Naive thymus-derived CD4-positive, alpha-beta T cell (primary cell): ENCODE measurements at regions of chr17 and their contacts with region 1.

Region 1: DNA sequence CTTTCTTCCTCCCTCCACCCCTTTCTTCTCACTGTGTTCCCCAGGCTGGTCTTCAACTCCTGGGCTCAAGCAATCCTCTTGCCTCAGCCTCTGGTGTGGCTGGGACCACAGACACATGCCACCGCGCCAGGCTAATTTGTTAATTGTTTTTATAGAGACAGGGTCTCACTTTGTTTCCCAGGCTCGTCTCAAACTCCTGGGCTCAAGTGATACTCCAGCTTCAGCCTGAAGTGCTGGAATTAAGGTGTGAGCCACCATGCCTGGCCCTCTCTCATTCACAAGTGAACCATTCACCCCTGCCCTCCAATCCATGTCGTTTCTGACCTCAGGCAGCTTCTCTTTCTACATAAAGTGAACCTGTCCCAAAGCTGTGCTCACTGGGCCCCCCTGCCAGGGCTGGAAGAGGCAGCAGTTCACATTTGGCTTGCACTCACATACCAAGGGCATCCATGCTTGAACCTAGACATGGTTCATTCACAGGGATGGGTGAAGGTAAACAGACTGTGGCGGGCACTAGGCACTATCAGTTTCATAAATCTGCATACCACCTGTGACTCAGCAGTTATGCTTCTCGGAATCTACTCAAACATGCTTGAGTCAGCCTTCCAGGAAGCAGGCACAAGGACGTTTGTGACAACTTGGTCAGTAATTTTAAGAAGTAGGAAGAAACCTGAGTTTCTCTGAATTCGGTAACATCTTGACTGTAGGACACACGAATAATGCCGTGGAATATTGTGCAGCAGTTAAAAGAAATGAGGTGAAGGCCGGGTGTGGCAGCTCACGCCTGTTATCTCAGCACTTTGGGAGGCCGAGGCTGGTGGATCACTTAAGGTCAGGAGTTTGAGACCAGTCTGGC is 6.0 kb upstream of the RNF213 start:
- DNase-seq: peak in 1 of 9 donors; percentile 63
- ATAC-seq: peak; percentile 54
- H3K4me3 ChIP-seq: no peak overlapping the region
- H3K4me3 Mint-ChIP-seq: peak overlapping the region in 1 of 10 donors; percentile 73
- H3K27ac ChIP-seq: peak overlapping the region; percentile 22
- H3K27ac Mint-ChIP-seq: peak overlapping the region in 8 of 9 donors; percentile 31 to 89 (median 76)
- H3K4me1 ChIP-seq: peaks cover 7 to 22% of the 10 kb centered on the region in 2 donors
- H3K4me1 Mint-ChIP-seq: peaks cover 2 to 70% (median 15%) of the 10 kb centered on the region in 7 donors
- H3K27me3 ChIP-seq: no peaks in the 10 kb centered on the region
- H3K27me3 Mint-ChIP-seq: peaks cover 0 to under 1% (median 0%) of the 10 kb centered on the region in 5 donors

Region 2: GRCh38 chr17:80008383-80008840 is 246.2 kb before region 1 on chr17:
- CTCF ChIA-PET with region 1: no interaction called
- POLR2A ChIA-PET with region 1: no interaction called
- intact Hi-C with region 1: loop called (anchors 1 to 5 kb)
- DNase-seq: peak; percentile 30 to 82 (median 63)
- ATAC-seq: peak; percentile 89
- H3K4me3 ChIP-seq: no peak overlapping the region
- H3K4me3 Mint-ChIP-seq: no peak overlapping the region
- H3K27ac ChIP-seq: no peak overlapping the region
- H3K27ac Mint-ChIP-seq: peak overlapping the region in 1 of 9 donors; percentile 20
- H3K4me1 ChIP-seq: peaks cover 0 to 3% of the 10 kb centered on the region in 2 donors
- H3K4me1 Mint-ChIP-seq: peaks cover 5 to 13% (median 8%) of the 10 kb centered on the region in 7 donors
- H3K27me3 ChIP-seq: no peaks in the 10 kb centered on the region
- H3K27me3 Mint-ChIP-seq: no peaks in the 10 kb centered on the region

Region 3: DNA sequence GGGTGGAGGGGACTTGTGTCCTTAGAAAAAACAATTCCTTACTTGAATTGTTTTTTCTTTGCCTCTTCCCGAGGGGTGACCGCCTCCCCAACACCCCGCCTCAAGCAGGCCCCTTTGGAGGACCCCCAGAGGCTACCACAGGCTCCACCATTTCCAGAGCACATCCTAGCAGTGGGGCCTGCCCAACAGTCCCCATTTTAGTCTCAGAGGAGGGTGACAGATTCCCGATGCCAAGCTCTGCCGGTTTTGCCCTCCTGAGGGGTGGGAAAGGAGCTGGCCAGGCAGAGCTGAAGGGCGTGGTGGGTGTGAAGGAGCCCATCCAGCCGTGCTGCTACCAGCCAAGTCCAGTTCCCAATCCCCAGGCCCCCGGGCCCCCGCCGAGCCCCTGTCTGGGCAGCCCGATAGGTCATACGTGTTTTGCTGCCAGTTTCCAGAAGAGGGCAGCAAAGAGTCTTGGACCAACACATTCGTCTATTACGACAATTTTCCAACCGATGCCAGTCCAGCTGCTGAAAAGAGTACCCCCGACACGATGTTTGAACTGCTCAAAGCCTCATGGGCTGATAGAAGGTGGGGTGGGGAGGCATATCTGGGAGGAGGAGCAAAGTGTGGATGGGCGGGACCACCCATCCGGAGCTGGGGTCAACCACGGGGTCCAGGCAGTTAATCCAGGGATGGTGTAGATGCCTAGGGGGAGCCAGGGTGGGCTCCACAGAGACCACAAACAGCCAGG is 172.1 kb before region 1 on chr17:
- CTCF ChIA-PET with region 1: no interaction called
- POLR2A ChIA-PET with region 1: no interaction called
- intact Hi-C with region 1: loop called (anchors 1 kb)
- DNase-seq: peak; percentile 30 to 69 (median 56)
- ATAC-seq: peak; percentile 71
- H3K4me3 ChIP-seq: no peak overlapping the region
- H3K4me3 Mint-ChIP-seq: no peak overlapping the region
- H3K27ac ChIP-seq: no peak overlapping the region
- H3K27ac Mint-ChIP-seq: no peak overlapping the region
- H3K4me1 ChIP-seq: peaks cover 0 to 5% of the 10 kb centered on the region in 2 donors
- H3K4me1 Mint-ChIP-seq: peaks cover 0 to 4% (median 2%) of the 10 kb centered on the region in 7 donors
- H3K27me3 ChIP-seq: no peaks in the 10 kb centered on the region
- H3K27me3 Mint-ChIP-seq: peaks cover 0 to 4% (median 0%) of the 10 kb centered on the region in 5 donors

Region 4: GRCh38 chr17:80101011-80101945 is 153.3 kb before region 1 on chr17 and contains the start of gene GAA:
- CTCF ChIA-PET with region 1: no interaction called
- POLR2A ChIA-PET with region 1: no interaction called
- intact Hi-C with region 1: loop called (anchors 1 kb)
- DNase-seq: peak; percentile 84 to 97 (median 91)
- ATAC-seq: peak; percentile 97
- H3K4me3 ChIP-seq: peak within 1 kb of the TSS; percentile 79
- H3K4me3 Mint-ChIP-seq: peak within 1 kb of the TSS; percentile 85 to 93 (median 90)
- H3K27ac ChIP-seq: peak within 1 kb of the TSS; percentile 86
- H3K27ac Mint-ChIP-seq: peak within 1 kb of the TSS; percentile 81 to 93 (median 86)
- H3K4me1 ChIP-seq: peaks cover 10 to 16% of the 10 kb centered on the region in 2 donors
- H3K4me1 Mint-ChIP-seq: peaks cover 20 to 30% (median 27%) of the 10 kb centered on the region in 7 donors
- H3K27me3 ChIP-seq: no peaks in the 10 kb centered on the region
- H3K27me3 Mint-ChIP-seq: peaks cover 0 to 10% (median 0%) of the 10 kb centered on the region in 5 donors
- total RNA-seq, gene GAA: 18.5 to 67.8 (median 54.6) TPM

Region 5: GRCh38 chr17:80147035-80147836 is 107.4 kb before region 1 on chr17 and contains the start of gene EIF4A3:
- CTCF ChIA-PET with region 1: no interaction called
- POLR2A ChIA-PET with region 1: no interaction called
- intact Hi-C with region 1: loop called (anchors 2 kb)
- DNase-seq: peak; percentile 84 to 98 (median 96)
- ATAC-seq: peak; percentile 97
- H3K4me3 ChIP-seq: peak within 1 kb of the TSS; percentile 64
- H3K4me3 Mint-ChIP-seq: peak within 1 kb of the TSS; percentile 81 to 100 (median 98)
- H3K27ac ChIP-seq: peak within 1 kb of the TSS; percentile 91
- H3K27ac Mint-ChIP-seq: peak within 1 kb of the TSS; percentile 68 to 100 (median 97)
- H3K4me1 ChIP-seq: peaks cover 19 to 21% of the 10 kb centered on the region in 2 donors
- H3K4me1 Mint-ChIP-seq: peaks cover 15 to 59% (median 44%) of the 10 kb centered on the region in 7 donors
- H3K27me3 ChIP-seq: no peaks in the 10 kb centered on the region
- H3K27me3 Mint-ChIP-seq: no peaks in the 10 kb centered on the region
- total RNA-seq, gene EIF4A3: 48.6 to 128 (median 75.9) TPM

Region 6: DNA sequence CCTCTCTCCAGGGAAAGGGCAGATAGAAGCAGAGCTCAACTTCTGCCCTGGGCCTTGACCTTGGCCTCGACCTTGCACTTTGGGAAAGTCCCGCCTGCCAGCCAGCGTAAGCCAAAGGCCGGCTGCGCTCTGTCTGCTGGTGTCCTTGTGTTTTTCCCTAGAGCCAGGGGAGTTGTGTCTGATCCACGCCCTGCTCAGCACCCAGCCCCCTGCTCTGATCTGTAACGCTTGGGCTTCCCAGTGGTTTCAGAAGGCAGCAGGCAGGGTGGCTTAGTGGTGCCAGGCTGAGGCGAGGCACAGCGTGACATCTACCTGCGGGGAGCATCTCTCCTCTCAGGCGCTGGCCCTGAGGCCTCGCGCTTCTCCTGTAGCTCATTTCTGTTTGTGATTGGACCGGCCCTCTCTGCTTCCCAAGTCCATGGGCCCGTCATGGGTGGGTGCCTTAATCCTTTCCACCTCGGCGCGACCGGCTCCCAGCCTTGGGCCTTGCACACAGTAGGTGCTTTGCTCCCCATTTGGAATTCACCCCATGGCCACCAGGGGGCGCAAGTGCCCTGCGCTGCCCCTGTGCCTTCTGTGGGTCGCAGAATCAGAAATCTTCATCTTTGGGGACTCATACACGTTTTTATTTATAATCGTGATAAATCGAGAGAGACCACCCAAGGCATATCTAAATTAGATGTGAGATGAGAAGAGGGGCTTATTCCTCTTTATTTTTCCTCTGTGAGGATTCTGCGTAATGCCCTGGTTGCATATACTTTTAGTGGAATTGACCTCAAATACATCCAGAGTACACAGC is 58.7 kb before region 1 on chr17:
- CTCF ChIA-PET with region 1: interaction called, 15 read pairs
- POLR2A ChIA-PET with region 1: no interaction called
- intact Hi-C with region 1: loop called (anchors 1 kb)
- DNase-seq: peak; percentile 33 to 64 (median 54)
- ATAC-seq: peak; percentile 80
- H3K4me3 ChIP-seq: no peak overlapping the region
- H3K4me3 Mint-ChIP-seq: no peak overlapping the region
- H3K27ac ChIP-seq: no peak overlapping the region
- H3K27ac Mint-ChIP-seq: peak overlapping the region in 5 of 9 donors; percentile 12 to 81 (median 68)
- H3K4me1 ChIP-seq: no peaks in the 10 kb centered on the region
- H3K4me1 Mint-ChIP-seq: peaks cover 0 to 5% (median 0%) of the 10 kb centered on the region in 7 donors
- H3K27me3 ChIP-seq: no peaks in the 10 kb centered on the region
- H3K27me3 Mint-ChIP-seq: peaks cover 0 to 12% (median 7%) of the 10 kb centered on the region in 5 donors

Region 7: GRCh38 chr17:80219013-80219762 is 35.4 kb before region 1 on chr17:
- CTCF ChIA-PET with region 1: no interaction called
- POLR2A ChIA-PET with region 1: interaction called, 14 read pairs
- intact Hi-C with region 1: loop called (anchors 1 to 2 kb)
- DNase-seq: peak; percentile 77 to 90 (median 86)
- ATAC-seq: peak; percentile 90
- H3K4me3 ChIP-seq: peak overlapping the region; percentile 84
- H3K4me3 Mint-ChIP-seq: peak overlapping the region; percentile 86 to 96 (median 92)
- H3K27ac ChIP-seq: peak overlapping the region; percentile 93
- H3K27ac Mint-ChIP-seq: peak overlapping the region; percentile 86 to 98 (median 95)
- H3K4me1 ChIP-seq: peaks cover 13 to 30% of the 10 kb centered on the region in 2 donors
- H3K4me1 Mint-ChIP-seq: peaks cover 21 to 40% (median 26%) of the 10 kb centered on the region in 7 donors
- H3K27me3 ChIP-seq: no peaks in the 10 kb centered on the region
- H3K27me3 Mint-ChIP-seq: peaks cover 0 to 3% (median 0%) of the 10 kb centered on the region in 5 donors